OCI-LY7 (cell line): ENCODE measurements at regions of chr12 and their contacts with region 1.

Region 1: GRCh38 chr12:92034858-92035401 is 110.7 kb downstream of the BTG1 start:
- DNase-seq: peak; percentile 88
- H3K4me3 ChIP-seq: peak overlapping the region; percentile 64
- H3K27ac ChIP-seq: peak overlapping the region; percentile 64
- H3K4me1 ChIP-seq: peaks cover 70% of the 10 kb centered on the region
- CTCF ChIP-seq: no peak

Region 2: DNA sequence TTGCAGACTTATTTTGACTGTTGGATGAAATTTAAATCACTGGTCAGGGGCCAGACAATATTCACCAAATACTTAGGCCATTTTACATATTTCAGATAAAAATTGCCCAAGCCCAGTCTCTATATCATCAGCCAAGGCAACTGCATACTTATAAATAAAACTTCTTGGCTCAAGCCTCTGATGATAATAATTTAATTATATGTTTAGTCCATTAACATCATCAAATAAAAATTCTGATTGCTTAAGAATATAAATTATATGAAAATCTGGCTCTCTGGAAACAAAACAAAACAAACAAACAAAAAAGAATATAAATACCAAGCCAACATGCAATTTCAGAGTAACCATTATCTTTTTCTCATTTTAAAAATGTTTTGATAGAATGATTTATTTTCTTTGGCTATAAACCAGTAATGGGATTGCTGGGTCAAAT is 54.5 kb before region 1 on chr12:
- CTCF ChIA-PET with region 1: no interaction called
- POLR2A ChIA-PET with region 1: no interaction called
- intact Hi-C with region 1: no loop called
- DNase-seq: no peak
- H3K4me3 ChIP-seq: no peak overlapping the region
- H3K27ac ChIP-seq: no peak overlapping the region
- H3K4me1 ChIP-seq: no peaks in the 10 kb centered on the region
- CTCF ChIP-seq: no peak

Region 3: DNA sequence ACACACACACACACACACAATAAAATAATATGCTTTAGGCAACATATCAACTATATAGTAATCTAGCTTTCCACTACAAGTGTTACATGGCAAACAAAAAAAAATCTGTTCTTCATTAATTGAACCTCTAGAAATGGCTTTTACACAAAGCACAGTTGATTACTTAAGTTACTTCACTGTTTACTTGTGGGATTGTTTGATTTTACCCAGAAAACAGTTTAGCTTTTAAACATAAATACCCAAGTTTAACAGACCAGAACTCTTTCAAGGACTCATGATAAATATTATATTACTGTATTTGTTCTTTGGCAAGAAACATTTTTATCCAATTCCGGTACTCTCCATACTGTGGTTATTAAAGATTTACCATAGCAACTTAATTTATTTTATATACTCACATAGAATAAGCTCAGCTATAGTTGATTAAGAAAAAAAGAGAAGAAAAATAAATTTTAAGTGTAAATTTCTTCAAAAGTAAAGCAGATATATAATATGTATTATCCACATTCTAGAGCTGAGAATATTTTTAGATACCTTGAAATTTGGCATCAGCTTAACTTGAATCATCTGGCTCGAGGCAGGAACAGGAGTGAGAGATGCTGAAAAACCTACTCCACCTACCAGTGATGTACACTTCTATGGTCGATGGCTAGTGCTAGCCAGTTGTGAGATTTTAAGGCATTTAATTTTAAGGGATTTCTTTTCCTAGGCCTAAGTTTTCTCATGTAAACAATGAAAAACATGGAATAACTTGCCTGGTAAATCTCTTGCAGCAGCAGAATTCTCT is 15.2 kb before region 1 on chr12:
- CTCF ChIA-PET with region 1: no interaction called
- POLR2A ChIA-PET with region 1: interaction called, 11 read pairs
- intact Hi-C with region 1: no loop called
- DNase-seq: no peak
- H3K4me3 ChIP-seq: no peak overlapping the region
- H3K27ac ChIP-seq: no peak overlapping the region
- H3K4me1 ChIP-seq: no peaks in the 10 kb centered on the region
- CTCF ChIP-seq: no peak

Region 4: GRCh38 chr12:92136965-92137721 is 102.2 kb after region 1 on chr12:
- CTCF ChIA-PET with region 1: interaction called, 3 read pairs
- POLR2A ChIA-PET with region 1: interaction called, 12 read pairs
- intact Hi-C with region 1: no loop called
- DNase-seq: peak; percentile 38
- H3K4me3 ChIP-seq: peak overlapping the region; percentile 86
- H3K27ac ChIP-seq: peak overlapping the region; percentile 23
- H3K4me1 ChIP-seq: peaks cover 77% of the 10 kb centered on the region
- CTCF ChIP-seq: no peak